ENCODE measurements at regions of chr7 and their contacts with region 1.

Region 1: DNA sequence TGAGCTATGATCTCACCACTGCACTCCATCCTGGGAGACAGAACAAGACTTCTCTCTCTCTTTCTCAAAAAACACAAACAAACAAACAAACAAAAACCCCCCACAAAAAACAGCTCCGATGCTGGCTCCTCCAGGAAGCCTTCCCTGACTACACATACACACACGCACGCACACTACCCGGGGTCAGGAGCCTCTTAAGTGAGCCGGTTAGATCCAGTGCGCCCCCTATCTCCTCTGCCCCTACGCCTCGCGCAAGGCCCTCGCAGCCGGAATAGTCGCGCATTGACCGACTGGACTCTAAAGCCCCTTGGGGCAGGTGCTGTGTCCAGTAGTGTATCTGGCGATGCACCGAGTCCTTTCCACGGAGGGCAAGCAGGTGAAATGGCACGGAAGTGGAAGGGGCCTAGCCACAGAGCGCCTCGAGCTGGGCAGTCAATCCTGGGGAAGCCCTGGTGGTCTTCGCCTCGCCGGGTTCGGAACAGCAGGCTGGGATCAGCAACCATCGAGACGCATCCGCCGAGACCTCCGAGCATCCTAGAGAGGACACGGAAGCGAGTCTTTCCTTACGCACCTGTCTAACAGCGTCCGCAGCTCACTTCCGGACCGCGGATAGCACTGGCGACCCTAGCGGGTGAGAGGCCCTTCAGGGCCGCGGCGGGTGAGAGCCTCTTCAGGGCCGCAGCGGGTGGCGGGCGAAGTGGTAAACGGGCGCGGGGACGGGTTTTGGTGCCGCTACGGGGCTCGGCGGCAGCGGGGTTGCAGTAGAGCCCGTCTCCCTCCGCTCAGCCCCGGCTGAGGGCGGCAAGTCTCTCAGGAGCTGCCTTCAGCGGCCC is at the start of gene ZSCAN25:
- DNase-seq: peak; percentile 78 to 85
- ATAC-seq: peak; percentile 98
- H3K4me3 ChIP-seq: peak within 1 kb of the TSS; percentile 97 to 99 (median 98)
- H3K27ac ChIP-seq: peak within 1 kb of the TSS; percentile 87 to 93 (median 91)
- H3K4me1 ChIP-seq: peaks cover 12 to 16% of the 10 kb centered on the region in 2 donors
- H3K27me3 ChIP-seq: no peaks in the 10 kb centered on the region
- CTCF ChIP-seq: peak in 2 of 5 experiments; percentile 18 to 50
- POLR2A ChIP-seq: peak; percentile 36 to 66
- total RNA-seq, gene ZSCAN25: 6.0 to 7.9 (median 7.2) TPM

Region 2: DNA sequence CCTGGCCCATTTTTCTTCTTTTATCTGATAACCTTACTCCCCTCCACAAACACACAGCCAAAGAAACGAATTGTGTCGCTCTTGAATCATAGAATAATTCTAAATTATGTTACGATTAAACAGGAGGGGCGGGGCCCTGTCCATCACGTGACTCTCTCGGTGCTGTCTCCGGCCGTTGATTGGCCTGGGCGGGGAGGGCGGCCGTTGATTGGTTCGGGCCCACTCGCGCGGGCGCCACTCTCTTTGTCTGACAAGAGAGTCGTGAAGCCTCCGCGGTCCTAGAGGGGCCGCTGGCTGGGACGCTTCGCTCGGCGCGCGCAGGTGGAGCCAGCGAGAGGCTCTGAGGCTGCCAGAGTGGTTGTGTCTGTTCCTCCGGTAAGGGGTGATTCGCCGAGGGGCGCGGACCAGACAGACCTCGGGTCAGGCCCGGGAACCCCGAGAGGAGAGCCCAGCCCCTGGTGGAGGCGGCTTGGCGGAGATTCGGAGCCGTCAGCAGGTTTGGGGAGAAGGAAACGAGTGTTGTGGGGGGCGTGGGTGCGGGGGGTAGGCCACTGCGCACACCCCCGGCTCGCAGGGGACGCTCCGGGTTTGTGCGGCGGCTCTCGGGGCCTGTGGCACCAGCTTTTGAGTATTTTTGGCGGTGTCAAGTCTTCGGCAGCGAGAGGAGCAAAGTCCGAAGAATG is 143.9 kb before region 1 on chr7 and contains the start of gene ZNF789:
- in situ Hi-C with region 1: no loop called
- intact Hi-C with region 1: loop called (anchors 1 kb)
- DNase-seq: peak; percentile 96 to 97
- ATAC-seq: peak; percentile 92 to 94
- H3K4me3 ChIP-seq: peak within 1 kb of the TSS; percentile 70 to 90 (median 88)
- H3K27ac ChIP-seq: peak within 1 kb of the TSS; percentile 80 to 95 (median 89)
- H3K4me1 ChIP-seq: peaks cover 9 to 14% of the 10 kb centered on the region in 2 donors
- H3K27me3 ChIP-seq: no peaks in the 10 kb centered on the region
- CTCF ChIP-seq: peak in 1 of 5 experiments; percentile 11
- POLR2A ChIP-seq: peak; percentile 33 to 55
- total RNA-seq, gene ZNF789: 1.2 to 2.8 (median 1.4) TPM

Region 3: DNA sequence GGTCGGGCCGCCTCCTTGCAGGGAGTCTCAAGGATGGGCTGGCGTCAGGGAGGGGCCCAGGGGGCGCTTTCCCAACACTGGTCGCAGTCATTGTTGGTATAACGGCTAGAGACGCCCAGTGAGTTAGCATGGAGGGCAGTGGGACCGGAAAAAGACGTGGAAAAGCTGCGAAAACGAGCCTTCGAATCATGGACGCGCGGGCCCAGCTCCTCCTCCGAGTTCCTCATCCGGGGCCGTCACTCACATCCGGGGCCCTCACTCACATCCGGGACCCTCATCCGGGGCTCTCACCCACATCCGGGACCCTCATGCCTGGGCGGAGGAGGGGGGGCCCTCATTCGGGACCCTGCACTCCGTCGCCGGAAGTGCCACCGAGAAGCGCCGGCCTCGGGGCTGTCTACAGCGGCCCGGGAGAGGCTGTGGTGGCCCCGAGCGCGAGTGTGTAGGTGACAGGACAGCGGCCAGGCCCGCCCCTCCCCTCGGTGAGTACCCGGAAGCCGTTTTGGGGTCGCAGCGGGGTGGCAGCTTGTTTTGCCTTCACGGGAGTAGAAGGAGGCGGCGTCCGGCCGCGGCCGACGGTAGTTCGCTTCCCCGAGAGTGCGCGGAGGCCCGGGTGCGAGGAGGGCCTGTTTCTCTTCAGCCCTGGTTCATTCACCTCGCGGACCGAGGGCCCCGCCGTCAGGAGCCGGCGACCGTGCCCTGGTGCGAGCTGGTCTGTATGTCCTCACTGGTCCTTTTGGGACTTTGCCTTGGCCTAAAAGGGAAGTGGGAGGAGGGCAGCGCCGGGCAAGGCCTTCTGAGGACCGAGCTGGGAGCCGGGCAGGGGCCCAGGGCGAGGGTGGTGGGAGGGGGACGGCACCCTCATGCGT is 58.0 kb before region 1 on chr7 and contains the start of gene ZNF655:
- in situ Hi-C with region 1: no loop called
- intact Hi-C with region 1: loop called (anchors 2 kb)
- DNase-seq: peak; percentile 91 to 92
- ATAC-seq: peak; percentile 86 to 92
- H3K4me3 ChIP-seq: peak within 1 kb of the TSS; percentile 82 to 94 (median 90)
- H3K27ac ChIP-seq: peak within 1 kb of the TSS; percentile 96 to 99 (median 98)
- H3K4me1 ChIP-seq: peaks cover 19 to 31% of the 10 kb centered on the region in 2 donors
- H3K27me3 ChIP-seq: no peaks in the 10 kb centered on the region
- CTCF ChIP-seq: no peak
- POLR2A ChIP-seq: peak; percentile 91 to 93
- total RNA-seq, gene ZNF655: 41.5 to 85.1 (median 56.5) TPM

Measured in gastrocnemius medialis (tissue), 4 donors.